Transverse colon (tissue), 4 donors: ENCODE measurements at regions of chr6 and their contacts with region 1.

Region 1: DNA sequence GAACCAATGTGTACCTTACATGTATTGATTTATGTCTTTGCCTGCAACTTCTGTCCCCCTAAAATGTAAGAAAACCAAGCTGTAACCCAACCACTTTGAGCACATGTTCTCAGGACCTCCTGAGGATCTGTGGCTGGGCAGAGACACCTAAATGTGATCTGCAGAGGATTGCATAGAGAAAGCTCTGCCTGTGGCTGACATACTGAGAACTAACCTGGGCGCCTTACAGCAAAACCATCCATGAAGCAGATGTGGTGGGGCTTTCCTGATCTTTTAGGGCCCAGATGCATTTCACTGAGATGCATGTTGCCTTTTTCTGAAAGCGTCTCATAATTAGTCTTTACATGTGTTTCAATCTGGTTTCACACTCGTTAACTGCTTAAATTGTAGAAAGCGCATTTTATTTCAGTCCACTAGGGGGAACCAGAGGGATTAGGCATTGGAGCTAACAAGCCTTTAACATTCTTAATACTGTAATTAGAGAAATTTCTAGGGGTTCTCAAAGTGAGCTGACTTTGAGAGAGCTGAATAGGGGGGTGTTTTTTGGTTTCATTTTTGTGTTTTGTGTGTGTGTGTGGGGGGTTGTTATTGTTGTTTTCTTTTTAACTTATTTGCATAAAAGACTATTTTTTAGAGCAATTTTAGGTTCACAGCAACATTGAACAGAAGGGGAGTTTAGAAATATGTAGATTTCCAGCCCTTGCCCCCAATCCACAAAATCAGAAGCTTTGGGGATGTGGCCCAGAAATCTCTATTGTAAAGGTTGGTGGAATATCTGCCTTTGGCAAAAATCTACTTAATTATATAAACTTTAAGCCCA is 50.9 kb upstream of the FAM184A start:
- DNase-seq: no peak
- H3K4me3 ChIP-seq: no peak overlapping the region
- H3K27ac ChIP-seq: no peak overlapping the region
- H3K4me1 ChIP-seq: peaks cover 0 to 19% (median 12%) of the 10 kb centered on the region in 4 donors
- H3K27me3 ChIP-seq: no peaks in the 10 kb centered on the region
- CTCF ChIP-seq: peak; percentile 74 to 88 (median 85)
- EP300 ChIP-seq: no peak
- POLR2A ChIP-seq: no peak

Region 2: GRCh38 chr6:119096721-119097565 is 32.4 kb before region 1 on chr6:
- in situ Hi-C with region 1: no loop called
- intact Hi-C with region 1: no loop called
- DNase-seq: peak; percentile 38
- H3K4me3 ChIP-seq: no peak overlapping the region
- H3K27ac ChIP-seq: peak overlapping the region; percentile 12 to 65 (median 40)
- H3K4me1 ChIP-seq: peaks cover 0 to 7% (median 2%) of the 10 kb centered on the region in 4 donors
- H3K27me3 ChIP-seq: no peaks in the 10 kb centered on the region
- CTCF ChIP-seq: no peak
- EP300 ChIP-seq: no peak
- POLR2A ChIP-seq: no peak

Region 3: GRCh38 chr6:119215885-119216590 is 86.7 kb after region 1 on chr6:
- in situ Hi-C with region 1: no loop called
- intact Hi-C with region 1: no loop called
- DNase-seq: no peak
- H3K4me3 ChIP-seq: no peak overlapping the region
- H3K27ac ChIP-seq: no peak overlapping the region
- H3K4me1 ChIP-seq: peaks cover 0 to 10% (median 0%) of the 10 kb centered on the region in 4 donors
- H3K27me3 ChIP-seq: no peaks in the 10 kb centered on the region
- CTCF ChIP-seq: no peak
- EP300 ChIP-seq: no peak
- POLR2A ChIP-seq: no peak

Region 4: DNA sequence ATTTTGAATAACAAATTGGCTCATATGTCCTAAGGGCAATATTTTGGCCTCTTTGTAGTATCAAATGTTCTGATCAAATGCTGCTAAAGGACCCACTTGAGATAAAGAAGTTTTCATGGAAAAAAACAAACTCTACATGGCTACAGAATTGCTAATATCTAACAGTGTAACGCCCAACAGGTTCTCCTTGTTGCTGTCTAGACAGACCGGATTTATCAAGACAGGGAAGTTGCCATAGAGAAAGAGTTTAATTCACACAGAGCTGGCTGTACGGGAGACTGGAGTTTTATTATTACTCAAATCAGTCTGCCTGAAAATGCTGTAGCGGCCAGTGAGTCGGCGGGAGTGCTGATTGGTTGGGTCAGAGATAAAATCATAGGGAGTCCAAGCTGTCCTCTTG is 239.6 kb after region 1 on chr6:
- in situ Hi-C with region 1: no loop called
- intact Hi-C with region 1: no loop called
- DNase-seq: no peak
- H3K4me3 ChIP-seq: no peak overlapping the region
- H3K27ac ChIP-seq: no peak overlapping the region
- H3K4me1 ChIP-seq: no peaks in the 10 kb centered on the region
- H3K27me3 ChIP-seq: no peaks in the 10 kb centered on the region
- CTCF ChIP-seq: no peak
- EP300 ChIP-seq: no peak
- POLR2A ChIP-seq: no peak

Region 5: DNA sequence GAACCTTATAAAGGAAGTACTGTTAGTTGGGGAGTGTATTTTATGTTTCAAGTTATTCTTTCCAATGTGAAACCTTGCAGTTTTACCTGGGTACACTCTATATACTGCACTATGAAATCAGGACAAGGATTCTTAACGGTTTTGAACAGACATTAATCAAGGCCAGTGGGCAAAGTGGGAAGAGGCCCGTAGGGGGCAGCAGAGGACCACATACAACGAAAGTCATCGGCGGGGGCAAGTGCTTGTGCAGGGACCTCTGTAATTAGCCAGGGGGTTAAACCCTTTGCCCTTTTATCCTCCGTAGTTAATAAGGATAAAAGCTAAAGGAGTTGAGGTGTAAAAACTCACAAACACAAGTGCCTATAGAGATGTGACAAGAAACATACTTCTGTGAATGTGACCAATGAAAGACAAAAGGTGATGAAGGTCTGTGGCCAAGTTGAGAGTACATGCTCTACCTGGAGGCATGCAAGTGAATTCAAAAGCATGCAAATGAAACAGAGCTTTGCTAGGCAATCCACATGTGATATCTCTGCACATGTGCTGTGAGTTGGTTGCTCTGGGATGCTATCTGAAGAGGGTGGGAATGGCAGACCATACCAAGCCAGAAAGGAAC is 612.9 kb after region 1 on chr6:
- in situ Hi-C with region 1: loop called in 3 of 4 experiments (anchors 25 kb)
- intact Hi-C with region 1: no loop called
- DNase-seq: peak; percentile 65
- H3K4me3 ChIP-seq: no peak overlapping the region
- H3K27ac ChIP-seq: no peak overlapping the region
- H3K4me1 ChIP-seq: no peaks in the 10 kb centered on the region
- H3K27me3 ChIP-seq: no peaks in the 10 kb centered on the region
- CTCF ChIP-seq: peak; percentile 62 to 81 (median 68)
- EP300 ChIP-seq: no peak
- POLR2A ChIP-seq: no peak